ENCODE measurements at regions of chr15 and their contacts with region 1.

Region 1: GRCh38 chr15:62649793-62650420 is 392.6 kb upstream of the TPM1 start:
- DNase-seq: no peak
- H3K4me3 ChIP-seq: no peak overlapping the region
- H3K27ac ChIP-seq: no peak overlapping the region
- H3K4me1 ChIP-seq: peaks cover 3% of the 10 kb centered on the region
- H3K27me3 ChIP-seq: no peaks in the 10 kb centered on the region
- CTCF ChIP-seq: no peak

Region 2: GRCh38 chr15:62558640-62559380 is 91.1 kb before region 1 on chr15:
- intact Hi-C with region 1: loop called (anchors 10 kb)
- DNase-seq: no peak
- H3K4me3 ChIP-seq: no peak overlapping the region
- H3K27ac ChIP-seq: no peak overlapping the region
- H3K4me1 ChIP-seq: no peaks in the 10 kb centered on the region
- H3K27me3 ChIP-seq: no peaks in the 10 kb centered on the region
- CTCF ChIP-seq: no peak